WTC11 (cell line): ENCODE measurements at regions of chr20 and their contacts with region 1.

Region 1: DNA sequence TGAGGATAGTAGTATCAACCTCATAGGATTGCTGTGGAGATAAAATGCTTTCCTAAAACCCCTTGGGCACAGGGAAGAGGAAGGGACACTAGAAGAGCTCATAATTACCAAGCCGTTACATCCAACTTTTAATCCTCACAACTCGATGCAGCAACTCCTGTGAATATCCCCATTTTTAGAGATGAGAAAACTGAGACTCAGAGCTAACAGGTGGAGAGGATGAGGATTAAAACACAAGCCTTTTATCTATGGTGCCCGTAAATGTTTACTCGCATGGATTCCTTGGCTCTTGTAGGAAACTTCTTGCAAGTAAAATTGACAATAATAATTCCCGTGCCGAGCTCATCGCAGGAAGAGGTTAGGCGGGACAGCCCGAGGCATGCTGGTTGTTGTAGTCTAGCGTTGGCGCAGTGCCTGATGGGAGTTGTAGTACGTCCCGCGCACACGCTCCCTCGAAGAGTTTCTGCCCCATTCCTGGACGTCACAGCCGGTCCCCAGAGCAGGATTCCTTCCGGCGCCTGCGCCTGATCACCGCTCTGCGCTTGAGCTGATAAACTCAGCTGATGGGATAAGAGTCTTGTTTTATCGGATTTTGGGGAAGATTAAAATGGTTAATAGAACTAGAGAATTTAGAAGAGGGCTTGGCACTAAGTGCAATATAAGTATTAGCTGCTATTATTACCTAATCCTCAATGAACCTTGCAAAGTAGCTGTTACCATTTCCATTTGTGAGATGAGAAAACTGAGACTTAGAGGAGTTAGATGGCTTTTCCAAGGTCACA is 2.8 kb upstream of the UBE2V1 start:
- DNase-seq: peak; percentile 91
- ATAC-seq: peak; percentile 83
- H3K4me3 Mint-ChIP-seq: peak overlapping the region; percentile 98
- H3K27ac Mint-ChIP-seq: peak overlapping the region; percentile 91
- H3K4me1 Mint-ChIP-seq: peaks cover 39% of the 10 kb centered on the region
- H3K27me3 Mint-ChIP-seq: 0 out of 2 replicates have a peak, but pooled peaks cover 2% of the 10 kb centered on the region
- CTCF ChIP-seq: no peak

Region 2: GRCh38 chr20:50092436-50092835 is 23.3 kb before region 1 on chr20:
- CTCF ChIA-PET with region 1: no interaction called
- POLR2A ChIA-PET with region 1: no interaction called
- DNase-seq: no peak
- ATAC-seq: no peak
- H3K4me3 Mint-ChIP-seq: no peak overlapping the region
- H3K27ac Mint-ChIP-seq: peak overlapping the region; percentile 30; the same call in 1 of the 2 replicates
- H3K4me1 Mint-ChIP-seq: peaks cover 3% of the 10 kb centered on the region
- H3K27me3 Mint-ChIP-seq: no peaks in the 10 kb centered on the region
- CTCF ChIP-seq: no peak

Region 3: GRCh38 chr20:50165684-50166554 is 50.1 kb after region 1 on chr20:
- CTCF ChIA-PET with region 1: interaction called, 146 read pairs
- POLR2A ChIA-PET with region 1: interaction called, 10 read pairs
- DNase-seq: peak; percentile 82
- ATAC-seq: peak; percentile 81
- H3K4me3 Mint-ChIP-seq: peak overlapping the region; percentile 65
- H3K27ac Mint-ChIP-seq: peak overlapping the region; percentile 80
- H3K4me1 Mint-ChIP-seq: peaks cover 25% of the 10 kb centered on the region
- H3K27me3 Mint-ChIP-seq: no peaks in the 10 kb centered on the region; the same call in 1 of the 2 replicates
- CTCF ChIP-seq: no peak

Region 4: GRCh38 chr20:50172347-50173013 is 56.7 kb after region 1 on chr20:
- CTCF ChIA-PET with region 1: interaction called, 146 read pairs
- POLR2A ChIA-PET with region 1: interaction called, 6 read pairs
- DNase-seq: peak; percentile 93
- ATAC-seq: peak; percentile 96
- H3K4me3 Mint-ChIP-seq: peak overlapping the region; percentile 61
- H3K27ac Mint-ChIP-seq: peak overlapping the region; percentile 86
- H3K4me1 Mint-ChIP-seq: peaks cover 20% of the 10 kb centered on the region
- H3K27me3 Mint-ChIP-seq: no peaks in the 10 kb centered on the region; the same call in 1 of the 2 replicates
- CTCF ChIP-seq: no peak

Region 5: GRCh38 chr20:50509935-50510705 is 394.3 kb after region 1 on chr20 and contains the start of gene PTPN1:
- CTCF ChIA-PET with region 1: no interaction called
- POLR2A ChIA-PET with region 1: no interaction called
- DNase-seq: peak; percentile 99
- ATAC-seq: peak; percentile 97
- H3K4me3 Mint-ChIP-seq: peak within 1 kb of the TSS; percentile 93
- H3K27ac Mint-ChIP-seq: peak within 1 kb of the TSS; percentile 93
- H3K4me1 Mint-ChIP-seq: peaks cover 41% of the 10 kb centered on the region
- H3K27me3 Mint-ChIP-seq: no peaks in the 10 kb centered on the region
- CTCF ChIP-seq: no peak
- total RNA-seq, gene PTPN1: 23.4 to 29.4 TPM (median 25.3 TPM) in 3 replicates